ENCODE measurements at regions of chr15 and their contacts with region 1.

Region 1: GRCh38 chr15:88657326-88658069 is 18.7 kb downstream of the ISG20 start:
- DNase-seq: peak; percentile 43
- H3K4me3 ChIP-seq: no peak overlapping the region
- H3K27ac ChIP-seq: no peak overlapping the region
- H3K4me1 ChIP-seq: peaks cover 14% of the 10 kb centered on the region
- H3K27me3 ChIP-seq: no peaks in the 10 kb centered on the region
- CTCF ChIP-seq: peak; percentile 73 to 80
- POLR2A ChIP-seq: no peak

Region 2: GRCh38 chr15:88509321-88509720 is 148.2 kb before region 1 on chr15:
- CTCF ChIA-PET with region 1: no interaction called
- POLR2A ChIA-PET with region 1: no interaction called
- dilution Hi-C with region 1: no loop called
- intact Hi-C with region 1: no loop called
- DNase-seq: no peak
- H3K4me3 ChIP-seq: no peak overlapping the region
- H3K27ac ChIP-seq: no peak overlapping the region
- H3K4me1 ChIP-seq: peaks cover 4% of the 10 kb centered on the region
- H3K27me3 ChIP-seq: no peaks in the 10 kb centered on the region
- CTCF ChIP-seq: no peak
- POLR2A ChIP-seq: no peak

Region 3: DNA sequence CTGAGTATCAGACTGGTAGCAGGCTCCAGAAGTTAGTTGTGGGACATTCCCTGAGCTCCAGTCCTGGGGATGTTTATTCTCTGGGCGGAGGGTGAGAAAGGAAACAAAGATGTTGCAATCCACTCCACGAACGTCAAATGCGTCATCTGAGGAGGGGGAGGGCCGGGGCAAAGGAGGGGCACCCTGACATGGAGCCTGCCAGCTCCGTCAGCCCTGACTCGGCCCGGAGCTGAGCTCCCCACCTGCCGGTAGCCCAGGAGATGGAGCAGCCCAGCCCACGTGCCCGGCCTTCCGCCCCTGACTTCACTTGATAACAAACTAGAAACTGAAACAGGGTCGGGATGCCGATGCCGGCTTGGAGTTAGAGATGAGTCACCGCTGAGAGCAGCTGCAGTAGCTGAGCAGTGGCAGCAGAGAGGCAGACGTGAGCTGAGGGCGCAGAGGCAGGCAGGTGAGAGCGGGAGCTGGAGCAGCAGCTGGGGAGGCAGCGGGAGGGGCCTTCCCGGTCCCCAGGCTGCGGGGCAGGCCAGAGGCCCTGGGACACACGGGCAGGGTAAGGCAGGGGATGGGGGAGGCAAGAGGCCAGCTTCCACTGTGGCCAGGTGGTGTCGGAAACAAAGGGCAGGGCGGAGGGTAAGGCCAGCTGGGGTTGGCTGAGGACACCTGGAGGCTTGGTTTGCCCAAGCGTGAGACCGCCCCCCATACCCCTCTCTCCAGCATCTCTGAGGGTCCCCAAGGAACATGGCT is 18.7 kb before region 1 on chr15 and contains the start of gene ISG20:
- CTCF ChIA-PET with region 1: interaction called, 11 read pairs
- POLR2A ChIA-PET with region 1: no interaction called
- dilution Hi-C with region 1: no loop called
- intact Hi-C with region 1: no loop called
- DNase-seq: peak; percentile 99
- H3K4me3 ChIP-seq: peak within 1 kb of the TSS in 1 of 3 experiments; percentile 24
- H3K27ac ChIP-seq: peak within 1 kb of the TSS; percentile 86
- H3K4me1 ChIP-seq: peaks cover 21% of the 10 kb centered on the region
- H3K27me3 ChIP-seq: no peaks in the 10 kb centered on the region
- CTCF ChIP-seq: peak; percentile 30 to 54
- POLR2A ChIP-seq: peak; percentile 75
- total RNA-seq, gene ISG20: 5.4 and 6.4 TPM in 2 replicates

Region 4: DNA sequence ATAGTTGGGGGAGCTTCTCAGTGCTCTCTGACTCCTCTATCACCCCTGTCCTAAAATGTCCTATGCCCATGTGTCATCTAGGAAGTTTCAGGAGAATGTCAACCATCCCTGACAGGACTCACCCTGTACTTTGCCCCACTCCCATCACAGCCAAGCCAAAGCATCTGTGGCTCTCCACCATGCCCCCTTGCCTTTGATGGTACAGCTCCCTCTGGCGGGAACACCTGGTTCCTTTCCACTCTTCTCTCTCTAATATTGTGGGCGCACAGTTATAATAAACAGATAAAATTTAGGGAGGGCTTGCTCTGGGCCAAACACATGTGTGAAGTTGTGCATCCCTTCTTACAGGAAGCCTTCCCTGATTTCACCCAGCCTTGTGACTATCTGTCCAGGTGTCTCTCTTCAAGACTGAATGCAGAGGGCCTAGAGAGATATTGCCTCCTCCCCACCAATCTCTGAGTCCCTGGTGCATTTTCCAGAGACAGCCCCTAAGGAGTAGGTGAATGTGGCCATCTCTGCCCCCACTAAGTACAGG is 44.1 kb after region 1 on chr15:
- CTCF ChIA-PET with region 1: interaction called, 4 read pairs
- POLR2A ChIA-PET with region 1: no interaction called
- dilution Hi-C with region 1: no loop called
- intact Hi-C with region 1: loop called (anchors 5 kb)
- DNase-seq: no peak
- H3K4me3 ChIP-seq: no peak overlapping the region
- H3K27ac ChIP-seq: no peak overlapping the region
- H3K4me1 ChIP-seq: no peaks in the 10 kb centered on the region
- H3K27me3 ChIP-seq: peaks cover 6 to 21% of the 10 kb centered on the region in 2 experiments
- CTCF ChIP-seq: peak in 1 of 2 donors; percentile 17
- POLR2A ChIP-seq: no peak

Region 5: DNA sequence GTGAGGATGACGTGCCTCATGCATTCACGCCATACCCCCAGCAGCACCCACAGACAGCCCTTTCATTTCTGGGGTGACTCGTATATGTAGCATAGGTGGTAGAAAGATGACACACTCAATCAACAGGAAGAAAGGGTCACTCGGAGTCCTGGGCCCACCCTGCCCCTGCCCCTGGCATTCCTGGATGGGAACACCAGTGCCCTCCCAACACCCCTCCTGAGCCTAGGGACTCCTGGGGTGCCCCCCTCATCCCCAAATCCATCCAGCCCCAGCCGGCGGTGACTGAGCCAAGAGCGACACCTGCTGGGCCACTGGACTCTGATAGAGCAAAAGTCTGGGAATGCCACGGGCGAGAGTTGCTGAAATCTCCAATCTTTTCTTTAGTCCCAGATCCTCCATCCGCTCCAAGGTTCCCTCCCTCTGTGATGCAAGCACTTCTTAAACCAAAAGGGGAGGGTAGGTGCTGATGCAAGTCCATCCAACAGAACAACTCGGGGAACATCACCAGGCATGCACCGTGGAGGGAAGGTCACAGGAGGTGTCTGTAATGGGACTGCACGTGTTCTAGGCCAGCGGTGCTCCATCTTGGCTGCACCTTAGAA is 176.8 kb after region 1 on chr15:
- CTCF ChIA-PET with region 1: interaction called, 126 read pairs
- POLR2A ChIA-PET with region 1: no interaction called
- dilution Hi-C with region 1: no loop called
- intact Hi-C with region 1: loop called (anchors 1 kb)
- DNase-seq: peak; percentile 20
- H3K4me3 ChIP-seq: no peak overlapping the region
- H3K27ac ChIP-seq: no peak overlapping the region
- H3K4me1 ChIP-seq: no peaks in the 10 kb centered on the region
- H3K27me3 ChIP-seq: no peaks in the 10 kb centered on the region
- CTCF ChIP-seq: peak; percentile 53 to 65
- POLR2A ChIP-seq: no peak

Region 6: DNA sequence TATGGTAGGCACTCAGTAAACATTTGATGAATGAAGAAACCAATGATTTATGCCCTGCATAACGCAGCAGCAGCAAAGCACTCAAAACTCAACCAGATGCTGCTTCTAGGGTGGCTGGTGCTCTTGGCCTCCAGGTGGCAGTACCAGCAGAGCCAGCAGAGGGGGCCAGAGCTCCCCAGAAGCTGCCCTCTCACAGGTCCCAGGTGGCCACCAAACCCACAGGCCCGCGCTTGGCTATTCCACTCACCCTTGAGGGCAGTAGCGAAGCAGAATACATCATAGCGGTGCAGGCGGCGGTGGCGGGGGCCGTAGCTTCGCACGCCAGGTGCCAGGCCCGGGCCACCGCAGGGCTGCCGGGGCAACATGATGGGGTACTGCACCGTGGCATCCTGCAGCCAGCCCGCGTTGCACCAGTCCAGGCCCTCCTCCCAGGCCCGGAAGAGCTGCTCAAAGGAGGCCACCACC is 221.3 kb after region 1 on chr15:
- CTCF ChIA-PET with region 1: interaction called, 10 read pairs
- POLR2A ChIA-PET with region 1: no interaction called
- dilution Hi-C with region 1: no loop called
- intact Hi-C with region 1: no loop called
- DNase-seq: peak; percentile 39
- H3K4me3 ChIP-seq: no peak overlapping the region
- H3K27ac ChIP-seq: no peak overlapping the region
- H3K4me1 ChIP-seq: no peaks in the 10 kb centered on the region
- H3K27me3 ChIP-seq: no peaks in the 10 kb centered on the region
- CTCF ChIP-seq: peak; percentile 72 to 87
- POLR2A ChIP-seq: no peak

Region 7: GRCh38 chr15:89017370-89018066 is 360.0 kb after region 1 on chr15:
- CTCF ChIA-PET with region 1: no interaction called
- POLR2A ChIA-PET with region 1: no interaction called
- dilution Hi-C with region 1: no loop called
- intact Hi-C with region 1: loop called (anchors 1 kb)
- DNase-seq: peak; percentile 64
- H3K4me3 ChIP-seq: peak overlapping the region in 1 of 3 experiments; percentile 21
- H3K27ac ChIP-seq: no peak overlapping the region
- H3K4me1 ChIP-seq: no peaks in the 10 kb centered on the region
- H3K27me3 ChIP-seq: peaks cover 7 to 22% of the 10 kb centered on the region in 2 experiments
- CTCF ChIP-seq: peak; percentile 92
- POLR2A ChIP-seq: no peak

Region 8: GRCh38 chr15:89642106-89642505 is 984.6 kb after region 1 on chr15:
- CTCF ChIA-PET with region 1: no interaction called
- POLR2A ChIA-PET with region 1: no interaction called
- dilution Hi-C with region 1: no loop called
- intact Hi-C with region 1: no loop called
- DNase-seq: no peak
- H3K4me3 ChIP-seq: no peak overlapping the region
- H3K27ac ChIP-seq: no peak overlapping the region
- H3K4me1 ChIP-seq: no peaks in the 10 kb centered on the region
- H3K27me3 ChIP-seq: no peaks in the 10 kb centered on the region
- CTCF ChIP-seq: no peak
- POLR2A ChIP-seq: no peak

Region 9: DNA sequence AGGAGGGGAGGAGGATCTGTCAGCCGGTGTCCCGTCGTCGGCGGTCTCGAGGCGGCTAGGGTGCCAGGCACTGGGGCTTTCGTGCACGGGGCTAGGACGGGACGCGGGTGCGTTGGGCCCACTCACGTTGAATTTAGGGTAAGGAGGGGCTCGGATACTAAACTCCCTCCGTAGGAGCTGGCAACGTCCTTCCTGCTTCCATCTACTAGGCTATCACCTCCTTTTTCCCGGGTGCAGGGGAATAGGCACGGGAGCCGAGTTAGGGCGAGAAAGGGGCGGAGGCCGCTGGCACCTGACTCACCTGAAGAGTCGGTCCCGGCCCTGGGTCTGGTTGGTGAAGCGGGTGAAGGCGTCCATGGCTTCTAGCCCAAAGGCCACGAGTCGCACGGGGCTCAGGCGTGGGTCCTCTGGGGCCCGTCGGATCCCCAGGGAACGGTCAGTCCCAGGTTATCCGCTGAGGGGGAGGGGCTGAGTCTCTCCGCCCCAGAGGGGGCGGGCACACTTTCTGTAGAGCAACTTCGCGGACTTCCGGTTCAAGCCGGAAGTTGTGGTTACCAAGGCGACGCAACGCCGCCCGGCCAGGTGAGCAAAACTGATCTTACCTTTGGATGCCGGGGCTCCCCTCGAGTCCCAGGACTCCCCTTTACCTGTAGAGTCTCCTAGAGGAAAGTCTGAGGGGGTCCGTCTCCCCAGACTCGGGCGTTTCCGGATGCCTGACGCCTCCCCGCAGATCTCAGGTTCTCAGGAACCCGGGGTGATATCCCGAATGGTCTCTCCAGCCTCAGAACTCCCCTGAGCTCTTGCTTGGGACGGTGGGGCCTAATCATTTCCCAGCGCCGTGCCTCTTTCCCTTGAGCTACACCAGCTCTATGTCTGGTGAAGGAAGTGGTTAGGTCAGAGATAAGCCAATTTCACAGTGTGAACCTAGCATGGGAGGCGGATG is 1033.0 kb after region 1 on chr15 and contains the starts of genes PEX11A and WDR93:
- CTCF ChIA-PET with region 1: no interaction called
- POLR2A ChIA-PET with region 1: no interaction called
- dilution Hi-C with region 1: no loop called
- intact Hi-C with region 1: no loop called
- DNase-seq: peak; percentile 60
- H3K4me3 ChIP-seq: peak within 1 kb of the TSS; percentile 67 to 89 (median 73)
- H3K27ac ChIP-seq: no peak within 1 kb of the TSS
- H3K4me1 ChIP-seq: peaks cover 2% of the 10 kb centered on the region
- H3K27me3 ChIP-seq: peaks cover 7 to 10% of the 10 kb centered on the region in 2 experiments
- CTCF ChIP-seq: no peak
- POLR2A ChIP-seq: no peak
- total RNA-seq, gene PEX11A: 3.2 and 3.7 TPM in 2 replicates
- total RNA-seq, gene WDR93: not detected in 2 replicates

Measured in endothelial cell of umbilical vein (primary cell).